ENCODE measurements at regions of chr3 and their contacts with region 1.

Region 1: GRCh38 chr3:82977871-82978270 is 1216.4 kb upstream of the GBE1 start:
- DNase-seq: no peak
- H3K4me3 ChIP-seq: no peak overlapping the region
- H3K27ac ChIP-seq: no peak overlapping the region
- H3K4me1 ChIP-seq: no peaks in the 10 kb centered on the region
- H3K27me3 ChIP-seq: no peaks in the 10 kb centered on the region
- CTCF ChIP-seq: no peak
- POLR2A ChIP-seq: no peak

Region 2: GRCh38 chr3:81531263-81531662 is 1446.6 kb before region 1 on chr3:
- intact Hi-C with region 1: no loop called
- DNase-seq: no peak
- H3K4me3 ChIP-seq: no peak overlapping the region
- H3K27ac ChIP-seq: no peak overlapping the region
- H3K4me1 ChIP-seq: no peaks in the 10 kb centered on the region
- H3K27me3 ChIP-seq: no peaks in the 10 kb centered on the region
- CTCF ChIP-seq: no peak
- POLR2A ChIP-seq: no peak

Region 3: GRCh38 chr3:82386647-82387046 is 591.2 kb before region 1 on chr3:
- intact Hi-C with region 1: no loop called
- DNase-seq: no peak
- H3K4me3 ChIP-seq: no peak overlapping the region
- H3K27ac ChIP-seq: no peak overlapping the region
- H3K4me1 ChIP-seq: no peaks in the 10 kb centered on the region
- H3K27me3 ChIP-seq: no peaks in the 10 kb centered on the region
- CTCF ChIP-seq: no peak
- POLR2A ChIP-seq: no peak

Region 4: GRCh38 chr3:83003917-83004316 is 26.0 kb after region 1 on chr3:
- intact Hi-C with region 1: loop called (anchors 2 kb)
- DNase-seq: no peak
- H3K4me3 ChIP-seq: no peak overlapping the region
- H3K27ac ChIP-seq: no peak overlapping the region
- H3K4me1 ChIP-seq: no peaks in the 10 kb centered on the region
- H3K27me3 ChIP-seq: no peaks in the 10 kb centered on the region
- CTCF ChIP-seq: no peak
- POLR2A ChIP-seq: no peak